Activated CD4-positive, alpha-beta memory T cell treated with anti-CD3 and anti-CD28 coated beads, Interleukin-2, amount 10 ng/mL, durations not matched to agents 7 days and 5 days (primary cell): ENCODE measurements at regions of chr1 and their contacts with region 1.

Region 1: GRCh38 chr1:29181413-29182225 is at the start of gene SRSF4:
- DNase-seq: peak; percentile 99
- H3K4me3 Mint-ChIP-seq: peak within 1 kb of the TSS; percentile 98
- H3K27ac Mint-ChIP-seq: peak within 1 kb of the TSS; percentile 95
- H3K4me1 Mint-ChIP-seq: peaks cover 50% of the 10 kb centered on the region
- H3K27me3 Mint-ChIP-seq: no peaks in the 10 kb centered on the region
- total RNA-seq, gene SRSF4: 121 to 123 TPM

Region 2: DNA sequence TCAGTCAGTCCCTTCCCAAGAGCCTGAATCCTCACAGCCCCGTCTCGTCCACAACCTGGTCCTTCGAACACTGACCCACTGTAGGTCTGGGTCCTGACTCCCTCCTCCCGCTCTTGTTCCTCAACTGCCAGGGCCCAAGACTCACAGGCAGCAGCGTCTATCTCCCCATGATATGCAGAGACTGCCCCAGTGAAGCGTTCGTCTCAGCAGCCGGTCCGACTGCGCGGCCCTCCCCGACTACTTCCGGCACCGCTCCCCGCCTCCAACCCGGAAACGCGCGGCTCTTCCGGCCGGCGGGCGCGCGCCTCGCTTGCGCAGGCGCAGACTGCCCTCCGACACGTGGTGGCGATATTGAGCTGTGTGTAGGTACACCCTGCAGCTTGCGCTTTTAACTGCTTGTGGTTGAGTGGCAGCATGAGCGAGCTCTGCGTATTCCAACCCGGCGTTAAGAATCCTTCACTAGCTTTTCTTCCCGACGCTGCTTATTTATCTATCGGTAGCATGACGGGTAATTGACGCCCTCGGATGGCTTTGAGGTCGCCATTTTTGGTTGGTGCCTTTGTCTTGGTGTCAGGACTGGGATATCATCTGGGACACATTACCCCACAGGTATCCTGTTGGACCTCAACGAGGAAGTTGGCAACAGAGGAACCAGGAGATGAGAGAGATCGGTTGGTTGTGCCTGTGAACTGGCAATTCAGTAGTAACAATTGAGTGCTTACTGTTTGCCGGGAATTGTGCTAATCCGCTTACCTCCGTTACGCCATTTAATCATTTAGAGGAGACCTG is 538.6 kb before region 1 on chr1 and contains the start of gene TAF12:
- CTCF ChIA-PET with region 1: interaction called, 6 read pairs
- POLR2A ChIA-PET with region 1: interaction called, 21 read pairs
- DNase-seq: peak; percentile 95
- H3K4me3 Mint-ChIP-seq: peak within 1 kb of the TSS; percentile 96
- H3K27ac Mint-ChIP-seq: peak within 1 kb of the TSS; percentile 96
- H3K4me1 Mint-ChIP-seq: peaks cover 54% of the 10 kb centered on the region
- H3K27me3 Mint-ChIP-seq: no peaks in the 10 kb centered on the region
- total RNA-seq, gene TAF12: 33.8 to 34.0 TPM

Region 3: GRCh38 chr1:28736450-28737306 is 444.9 kb before region 1 on chr1 and contains the start of gene YTHDF2:
- CTCF ChIA-PET with region 1: interaction called, 20 read pairs
- POLR2A ChIA-PET with region 1: interaction called, 28 read pairs
- DNase-seq: peak; percentile 98
- H3K4me3 Mint-ChIP-seq: peak within 1 kb of the TSS; percentile 97
- H3K27ac Mint-ChIP-seq: peak within 1 kb of the TSS; percentile 94
- H3K4me1 Mint-ChIP-seq: peaks cover 38% of the 10 kb centered on the region
- H3K27me3 Mint-ChIP-seq: no peaks in the 10 kb centered on the region
- total RNA-seq, gene YTHDF2: 69.9 to 70.9 TPM

Region 4: GRCh38 chr1:28926629-28927265 is 254.9 kb before region 1 on chr1:
- CTCF ChIA-PET with region 1: interaction called, 3 read pairs
- POLR2A ChIA-PET with region 1: interaction called, 14 read pairs
- DNase-seq: peak; percentile 40
- H3K4me3 Mint-ChIP-seq: peak overlapping the region; percentile 50
- H3K27ac Mint-ChIP-seq: peak overlapping the region; percentile 89
- H3K4me1 Mint-ChIP-seq: peaks cover 44% of the 10 kb centered on the region
- H3K27me3 Mint-ChIP-seq: no peaks in the 10 kb centered on the region

Region 5: DNA sequence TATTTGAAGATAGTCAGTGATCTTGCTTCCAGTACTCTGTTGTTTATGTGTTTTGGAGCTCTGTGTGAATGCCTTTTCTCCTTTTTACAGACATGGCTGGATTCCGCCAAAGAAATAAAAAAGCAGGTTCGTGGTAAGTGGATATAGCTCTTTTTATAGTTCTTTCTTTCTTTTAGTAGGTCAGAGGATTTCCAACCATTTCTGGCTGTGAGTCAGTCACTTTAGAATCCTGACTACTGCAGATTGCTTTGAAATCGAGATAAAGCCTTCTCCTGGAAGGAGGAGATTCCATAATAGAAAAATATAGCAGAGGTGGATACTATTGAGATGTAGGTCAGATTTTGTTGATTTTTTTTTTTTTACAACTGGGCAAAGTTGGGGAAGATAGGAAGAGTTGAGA is 169.8 kb before region 1 on chr1:
- CTCF ChIA-PET with region 1: no interaction called
- POLR2A ChIA-PET with region 1: no interaction called
- DNase-seq: no peak
- H3K4me3 Mint-ChIP-seq: no peak overlapping the region
- H3K27ac Mint-ChIP-seq: no peak overlapping the region
- H3K4me1 Mint-ChIP-seq: no peaks in the 10 kb centered on the region
- H3K27me3 Mint-ChIP-seq: no peaks in the 10 kb centered on the region

Region 6: GRCh38 chr1:29171089-29171488 is 10.5 kb before region 1 on chr1:
- CTCF ChIA-PET with region 1: interaction called, 23 read pairs
- POLR2A ChIA-PET with region 1: interaction called, 108 read pairs
- DNase-seq: no peak
- H3K4me3 Mint-ChIP-seq: no peak overlapping the region
- H3K27ac Mint-ChIP-seq: peak overlapping the region; percentile 12
- H3K4me1 Mint-ChIP-seq: peaks cover 60% of the 10 kb centered on the region
- H3K27me3 Mint-ChIP-seq: no peaks in the 10 kb centered on the region

Region 7: GRCh38 chr1:29202584-29203340 is 21.1 kb after region 1 on chr1:
- CTCF ChIA-PET with region 1: interaction called, 72 read pairs
- POLR2A ChIA-PET with region 1: interaction called, 44 read pairs
- DNase-seq: peak; percentile 90
- H3K4me3 Mint-ChIP-seq: no peak overlapping the region
- H3K27ac Mint-ChIP-seq: no peak overlapping the region
- H3K4me1 Mint-ChIP-seq: peaks cover 6% of the 10 kb centered on the region
- H3K27me3 Mint-ChIP-seq: no peaks in the 10 kb centered on the region